IMR-90 (cell line): ENCODE measurements at regions of chr6 and their contacts with region 1.

Region 1: DNA sequence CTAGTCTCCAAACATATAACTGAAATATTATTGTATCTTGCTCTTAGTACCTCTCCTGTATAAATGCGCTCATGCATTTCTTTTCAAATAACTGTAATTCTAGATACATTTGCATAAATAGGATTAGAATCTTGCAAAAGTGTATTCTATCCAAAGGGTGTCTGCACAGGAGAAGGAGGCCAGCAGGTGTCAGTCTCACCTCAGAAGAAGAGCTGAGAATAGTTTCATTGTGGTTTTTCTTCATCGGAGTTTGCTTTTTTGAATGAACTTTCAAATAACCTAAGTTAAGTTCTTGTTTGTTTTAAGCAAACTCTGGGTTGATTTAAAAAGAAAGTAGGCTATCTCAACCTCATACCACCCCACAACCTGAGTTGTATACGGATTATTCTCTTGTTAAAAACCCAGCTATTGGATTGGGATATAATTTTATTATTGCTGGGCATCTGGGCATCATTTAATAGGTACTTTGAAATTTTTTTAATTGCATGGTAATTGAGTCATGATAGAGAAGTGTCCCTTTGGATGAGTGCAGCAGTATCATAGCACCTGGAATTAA is 125.0 kb upstream of the MLIP start:
- DNase-seq: peak; percentile 70
- ATAC-seq: peak; percentile 63; the same call in 1 of the 2 replicates
- H3K4me3 ChIP-seq: no peak overlapping the region
- H3K27ac ChIP-seq: no peak overlapping the region
- H3K4me1 ChIP-seq: peaks cover 7% of the 10 kb centered on the region
- H3K27me3 ChIP-seq: no peaks in the 10 kb centered on the region
- CTCF ChIP-seq: peak; percentile 92
- POLR2A ChIP-seq: no peak
- RAD21 ChIP-seq: peak; percentile 93

Region 2: DNA sequence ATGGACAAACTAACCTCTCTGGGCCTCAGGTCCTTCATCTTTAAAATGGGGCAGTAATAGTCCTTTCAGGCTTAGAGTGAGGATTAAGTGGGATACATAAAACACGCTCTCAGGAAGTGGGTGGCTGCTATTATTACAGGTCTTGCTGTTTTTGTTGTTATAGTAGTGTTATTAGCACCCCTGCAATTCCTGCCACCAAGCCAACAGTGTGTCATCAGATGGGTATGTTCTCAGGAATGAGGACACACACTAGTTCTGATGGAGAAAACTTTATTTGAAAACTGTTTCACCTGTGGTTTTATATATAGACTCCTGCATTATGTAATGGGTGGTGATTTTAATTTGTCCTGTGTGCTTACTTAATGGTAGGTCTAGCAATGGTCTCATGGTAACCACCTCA is 59.7 kb before region 1 on chr6:
- CTCF ChIA-PET with region 1: no interaction called
- POLR2A ChIA-PET with region 1: no interaction called
- dilution Hi-C with region 1: no loop called
- in situ Hi-C with region 1: no loop called
- intact Hi-C with region 1: no loop called
- DNase-seq: peak; percentile 40
- ATAC-seq: no peak
- H3K4me3 ChIP-seq: no peak overlapping the region
- H3K27ac ChIP-seq: no peak overlapping the region
- H3K4me1 ChIP-seq: peaks cover 8% of the 10 kb centered on the region
- H3K27me3 ChIP-seq: no peaks in the 10 kb centered on the region
- CTCF ChIP-seq: no peak
- POLR2A ChIP-seq: no peak
- RAD21 ChIP-seq: no peak

Region 3: DNA sequence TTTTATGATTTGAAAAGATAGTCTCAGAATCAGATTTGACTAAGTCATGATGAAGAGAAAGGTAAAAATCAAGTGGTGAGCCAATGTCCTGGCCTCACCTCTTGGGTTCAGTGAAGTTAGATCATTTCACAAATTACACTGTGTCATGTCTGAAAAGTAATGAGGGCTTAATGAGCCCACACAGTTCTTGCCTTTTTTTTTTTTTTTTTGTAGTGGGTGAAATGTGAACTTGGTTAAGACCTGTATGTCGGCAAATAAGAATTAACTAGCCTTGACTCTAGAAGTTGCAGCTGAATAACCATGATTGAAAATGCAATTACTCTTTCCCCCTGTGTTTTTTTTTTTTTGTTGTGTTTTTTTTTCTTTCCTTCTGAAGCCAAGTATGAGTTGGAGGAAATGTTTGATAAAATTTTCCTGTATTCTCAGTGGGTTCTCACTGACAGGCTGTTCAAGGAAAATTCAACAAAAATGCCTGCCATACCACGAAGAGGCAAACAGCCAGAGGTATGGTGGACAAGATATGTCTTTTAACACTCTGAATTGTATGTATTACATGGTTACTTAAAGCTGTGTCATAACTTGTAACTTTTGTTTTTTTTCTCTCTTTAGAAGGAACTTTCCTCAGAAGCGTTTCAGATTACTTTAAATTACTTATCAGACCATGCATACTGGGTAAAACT is 10.2 kb before region 1 on chr6:
- CTCF ChIA-PET with region 1: no interaction called
- POLR2A ChIA-PET with region 1: no interaction called
- dilution Hi-C with region 1: no loop called
- in situ Hi-C with region 1: no loop called
- intact Hi-C with region 1: no loop called
- DNase-seq: peak; percentile 39
- ATAC-seq: peak; percentile 57
- H3K4me3 ChIP-seq: no peak overlapping the region
- H3K27ac ChIP-seq: no peak overlapping the region
- H3K4me1 ChIP-seq: no peaks in the 10 kb centered on the region; the same call in 1 of the 2 replicates
- H3K27me3 ChIP-seq: no peaks in the 10 kb centered on the region
- CTCF ChIP-seq: no peak
- POLR2A ChIP-seq: no peak
- RAD21 ChIP-seq: no peak

Region 4: GRCh38 chr6:54244430-54244829 is 258.2 kb after region 1 on chr6:
- CTCF ChIA-PET with region 1: interaction called, 7 read pairs
- POLR2A ChIA-PET with region 1: no interaction called
- dilution Hi-C with region 1: no loop called
- in situ Hi-C with region 1: no loop called
- intact Hi-C with region 1: loop called (anchors 5 kb)
- DNase-seq: peak; percentile 24
- ATAC-seq: peak; percentile 37; the same call in 1 of the 2 replicates
- H3K4me3 ChIP-seq: no peak overlapping the region
- H3K27ac ChIP-seq: no peak overlapping the region
- H3K4me1 ChIP-seq: no peaks in the 10 kb centered on the region
- H3K27me3 ChIP-seq: no peaks in the 10 kb centered on the region
- CTCF ChIP-seq: peak; percentile 53
- POLR2A ChIP-seq: no peak
- RAD21 ChIP-seq: peak; percentile 61

Region 5: GRCh38 chr6:54621285-54621684 is 635.0 kb after region 1 on chr6:
- CTCF ChIA-PET with region 1: no interaction called
- POLR2A ChIA-PET with region 1: no interaction called
- dilution Hi-C with region 1: no loop called
- in situ Hi-C with region 1: no loop called
- intact Hi-C with region 1: loop called (anchors 10 kb)
- DNase-seq: no peak
- ATAC-seq: no peak
- H3K4me3 ChIP-seq: no peak overlapping the region
- H3K27ac ChIP-seq: no peak overlapping the region
- H3K4me1 ChIP-seq: peaks cover 5% of the 10 kb centered on the region; the same call in 1 of the 2 replicates
- H3K27me3 ChIP-seq: no peaks in the 10 kb centered on the region
- CTCF ChIP-seq: peak; percentile 35
- POLR2A ChIP-seq: no peak
- RAD21 ChIP-seq: peak; percentile 25; the same call in 1 of the 2 replicates

Region 6: DNA sequence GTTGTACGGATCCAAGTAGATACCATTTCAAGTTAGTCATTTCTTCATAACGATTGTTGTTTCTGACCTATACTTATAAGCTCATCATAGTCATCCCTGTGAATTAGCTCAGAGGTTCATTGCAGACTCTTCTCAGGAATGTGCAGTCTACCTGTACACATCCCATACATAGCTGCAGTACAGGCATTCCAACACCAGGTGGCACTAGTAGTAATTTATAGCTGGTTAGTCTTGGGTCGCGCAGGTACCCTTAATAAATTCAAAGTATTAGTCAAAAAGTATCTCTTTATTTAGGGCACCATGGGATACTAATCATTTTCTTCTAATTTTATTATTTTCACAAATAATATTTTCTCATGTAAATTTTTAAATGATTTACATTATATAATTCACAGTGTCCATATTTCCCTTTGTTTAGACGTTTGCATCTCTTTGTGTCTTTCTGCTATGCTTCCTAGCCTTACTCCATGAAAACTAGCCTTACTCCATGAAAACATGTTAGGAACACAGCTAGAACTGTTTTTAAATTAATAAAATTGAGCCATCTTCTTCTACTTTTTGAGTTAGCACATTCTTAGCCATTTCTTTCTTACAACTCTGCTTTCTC is 731.7 kb after region 1 on chr6:
- CTCF ChIA-PET with region 1: interaction called, 6 read pairs
- POLR2A ChIA-PET with region 1: no interaction called
- dilution Hi-C with region 1: no loop called
- in situ Hi-C with region 1: loop called (anchors 25 kb)
- intact Hi-C with region 1: no loop called
- DNase-seq: peak; percentile 37
- ATAC-seq: peak; percentile 69; the same call in 1 of the 2 replicates
- H3K4me3 ChIP-seq: no peak overlapping the region
- H3K27ac ChIP-seq: no peak overlapping the region
- H3K4me1 ChIP-seq: peaks cover 2% of the 10 kb centered on the region; the same call in 1 of the 2 replicates
- H3K27me3 ChIP-seq: no peaks in the 10 kb centered on the region
- CTCF ChIP-seq: peak; percentile 63
- POLR2A ChIP-seq: no peak
- RAD21 ChIP-seq: peak; percentile 69

Region 7: DNA sequence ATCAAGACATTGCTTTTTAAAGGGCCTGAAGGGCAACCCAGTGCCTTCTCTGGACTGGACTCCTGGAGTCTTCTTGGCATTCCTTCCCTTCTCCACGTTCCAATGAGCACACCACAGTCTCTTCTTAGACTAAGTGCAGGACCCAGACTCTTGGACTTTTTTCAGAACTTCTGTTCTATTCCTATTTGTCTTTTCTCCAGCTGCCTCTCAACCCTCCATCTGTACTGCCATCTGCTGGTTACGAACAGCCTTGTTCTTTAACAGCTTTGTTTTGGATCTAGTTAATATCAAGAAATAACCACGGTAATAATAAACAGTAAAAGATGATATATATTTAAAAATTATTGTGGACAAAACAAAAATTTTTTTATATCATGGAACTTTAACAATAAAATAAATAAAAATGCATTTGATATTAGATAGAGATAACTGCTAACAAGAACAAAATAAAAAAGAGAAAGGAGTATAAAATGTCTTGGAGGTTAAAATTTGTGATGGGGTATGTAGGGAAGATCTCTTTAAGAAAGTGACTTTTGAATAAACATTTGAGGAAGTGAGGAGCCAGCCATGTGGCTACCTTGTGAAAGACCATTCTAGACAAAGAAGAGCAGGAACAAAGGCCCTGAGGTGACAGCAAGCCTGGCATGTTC is 1083.0 kb after region 1 on chr6:
- CTCF ChIA-PET with region 1: no interaction called
- POLR2A ChIA-PET with region 1: no interaction called
- dilution Hi-C with region 1: no loop called
- in situ Hi-C with region 1: loop called (anchors 5 kb)
- intact Hi-C with region 1: loop called (anchors 1 kb)
- DNase-seq: peak; percentile 66
- ATAC-seq: peak; percentile 79
- H3K4me3 ChIP-seq: no peak overlapping the region
- H3K27ac ChIP-seq: no peak overlapping the region
- H3K4me1 ChIP-seq: no peaks in the 10 kb centered on the region
- H3K27me3 ChIP-seq: no peaks in the 10 kb centered on the region
- CTCF ChIP-seq: peak; percentile 87
- POLR2A ChIP-seq: no peak
- RAD21 ChIP-seq: peak; percentile 93

Region 8: GRCh38 chr6:55445648-55446204 is 1459.5 kb after region 1 on chr6:
- CTCF ChIA-PET with region 1: no interaction called
- POLR2A ChIA-PET with region 1: no interaction called
- dilution Hi-C with region 1: no loop called
- in situ Hi-C with region 1: no loop called
- intact Hi-C with region 1: loop called (anchors 10 kb)
- DNase-seq: peak; percentile 45
- ATAC-seq: peak; percentile 48; the same call in 1 of the 2 replicates
- H3K4me3 ChIP-seq: no peak overlapping the region
- H3K27ac ChIP-seq: no peak overlapping the region
- H3K4me1 ChIP-seq: peaks cover 1% of the 10 kb centered on the region
- H3K27me3 ChIP-seq: no peaks in the 10 kb centered on the region
- CTCF ChIP-seq: peak; percentile 66
- POLR2A ChIP-seq: no peak
- RAD21 ChIP-seq: peak; percentile 74